Activated CD4-positive, alpha-beta T cell treated with anti-CD3 and anti-CD28 coated beads for 36 hours (primary cell): ENCODE measurements at regions of chr17 and their contacts with region 1.

Region 1: DNA sequence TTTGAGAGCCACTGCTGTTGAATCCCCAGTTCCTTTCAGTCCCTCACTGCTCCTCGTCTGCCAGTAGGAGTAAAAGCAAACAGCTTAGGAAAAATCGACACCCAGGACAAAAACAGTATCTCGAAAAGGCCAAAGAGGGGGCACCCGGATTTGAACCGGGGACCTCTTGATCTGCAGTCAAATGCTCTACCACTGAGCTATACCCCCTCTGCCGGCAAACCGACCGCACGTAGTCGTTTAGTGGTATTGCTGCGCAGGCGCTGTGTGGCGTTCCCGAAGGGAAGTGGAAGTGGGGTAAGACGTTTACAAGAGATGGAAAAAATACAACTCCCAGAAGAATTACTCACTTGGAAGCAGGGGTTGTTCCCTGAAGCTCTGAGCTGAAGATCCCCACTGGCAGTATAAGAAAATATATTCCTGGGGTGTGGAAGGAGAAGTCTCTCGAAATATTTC is 2.2 kb upstream of the PLXDC1 start:
- DNase-seq: peak; percentile 94
- ATAC-seq: peak; percentile 43
- H3K4me3 Mint-ChIP-seq: peak overlapping the region; percentile 95
- H3K27ac Mint-ChIP-seq: peak overlapping the region; percentile 95
- H3K4me1 Mint-ChIP-seq: peaks cover 40% of the 10 kb centered on the region
- H3K27me3 Mint-ChIP-seq: peaks cover 2% of the 10 kb centered on the region

Region 2: GRCh38 chr17:38674749-38675615 is 478.6 kb before region 1 on chr17 and contains the start of gene EPOP:
- CTCF ChIA-PET with region 1: no interaction called
- POLR2A ChIA-PET with region 1: no interaction called
- intact Hi-C with region 1: loop called (anchors 1 to 10 kb)
- DNase-seq: peak; percentile 96
- ATAC-seq: peak; percentile 78
- H3K4me3 Mint-ChIP-seq: peak within 1 kb of the TSS; percentile 76
- H3K27ac Mint-ChIP-seq: peak within 1 kb of the TSS; percentile 85
- H3K4me1 Mint-ChIP-seq: peaks cover 47% of the 10 kb centered on the region
- H3K27me3 Mint-ChIP-seq: peaks cover 9% of the 10 kb centered on the region
- total RNA-seq, gene EPOP: 31.8 to 37.3 TPM

Region 3: GRCh38 chr17:38799378-38800236 is 354.0 kb before region 1 on chr17 and contains the start of gene PIP4K2B:
- CTCF ChIA-PET with region 1: interaction called, 6 read pairs
- POLR2A ChIA-PET with region 1: interaction called, 4 read pairs
- intact Hi-C with region 1: loop called in 1 of 2 experiments (anchors 1 kb)
- DNase-seq: peak; percentile 93
- ATAC-seq: peak; percentile 83
- H3K4me3 Mint-ChIP-seq: peak within 1 kb of the TSS; percentile 99
- H3K27ac Mint-ChIP-seq: peak within 1 kb of the TSS; percentile 94
- H3K4me1 Mint-ChIP-seq: peaks cover 33% of the 10 kb centered on the region
- H3K27me3 Mint-ChIP-seq: no peaks in the 10 kb centered on the region
- total RNA-seq, gene PIP4K2B: 36.3 to 41.6 TPM

Region 4: GRCh38 chr17:38967290-38967738 is 186.3 kb before region 1 on chr17 and contains the start of gene FBXO47:
- CTCF ChIA-PET with region 1: interaction called, 14 read pairs
- POLR2A ChIA-PET with region 1: no interaction called
- intact Hi-C with region 1: loop called in 1 of 2 experiments (anchors 1 kb)
- DNase-seq: peak; percentile 91
- ATAC-seq: peak; percentile 98
- H3K4me3 Mint-ChIP-seq: peak within 1 kb of the TSS; percentile 64
- H3K27ac Mint-ChIP-seq: peak within 1 kb of the TSS; percentile 87
- H3K4me1 Mint-ChIP-seq: peaks cover 16% of the 10 kb centered on the region
- H3K27me3 Mint-ChIP-seq: no peaks in the 10 kb centered on the region
- total RNA-seq, gene FBXO47: 0.11 to 0.16 TPM

Region 5: DNA sequence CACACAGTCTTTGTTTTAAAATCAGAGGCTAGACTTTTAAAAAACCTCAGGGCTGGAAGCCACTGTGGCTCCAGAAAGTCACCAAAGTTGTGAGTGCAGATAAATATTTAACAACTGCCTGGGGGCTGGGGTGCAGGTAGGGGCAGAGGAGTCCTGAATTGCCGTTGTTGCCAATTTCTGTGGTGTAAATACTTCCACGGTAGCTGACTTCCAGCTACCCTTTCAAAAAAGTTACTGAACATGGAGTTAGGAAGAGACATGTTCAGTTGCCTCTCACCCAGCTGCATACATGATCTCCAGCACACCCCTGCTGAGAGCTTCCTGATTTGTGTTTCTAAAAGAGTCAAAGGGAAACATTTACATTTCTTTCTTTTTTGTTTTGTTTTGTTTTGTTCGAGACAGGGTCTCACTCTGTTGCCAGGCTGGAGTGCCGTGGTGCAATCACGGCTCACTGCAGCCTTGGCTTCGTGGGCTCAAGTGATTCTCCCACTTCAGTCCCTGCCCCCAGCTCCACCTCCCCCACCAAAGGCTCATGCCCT is 60.9 kb before region 1 on chr17:
- CTCF ChIA-PET with region 1: interaction called, 9 read pairs
- POLR2A ChIA-PET with region 1: no interaction called
- intact Hi-C with region 1: loop called in 1 of 2 experiments (anchors 2 kb)
- DNase-seq: peak; percentile 24
- ATAC-seq: peak; percentile 33
- H3K4me3 Mint-ChIP-seq: peak overlapping the region; percentile 63
- H3K27ac Mint-ChIP-seq: peak overlapping the region; percentile 87
- H3K4me1 Mint-ChIP-seq: peaks cover 72% of the 10 kb centered on the region
- H3K27me3 Mint-ChIP-seq: no peaks in the 10 kb centered on the region

Region 6: GRCh38 chr17:39235555-39236449 is 82.2 kb after region 1 on chr17:
- CTCF ChIA-PET with region 1: interaction called, 16 read pairs
- POLR2A ChIA-PET with region 1: no interaction called
- intact Hi-C with region 1: loop called in 1 of 2 experiments (anchors 2 kb)
- DNase-seq: peak; percentile 78
- ATAC-seq: peak; percentile 84
- H3K4me3 Mint-ChIP-seq: no peak overlapping the region
- H3K27ac Mint-ChIP-seq: no peak overlapping the region
- H3K4me1 Mint-ChIP-seq: peaks cover 41% of the 10 kb centered on the region
- H3K27me3 Mint-ChIP-seq: peaks cover 5% of the 10 kb centered on the region

Region 7: DNA sequence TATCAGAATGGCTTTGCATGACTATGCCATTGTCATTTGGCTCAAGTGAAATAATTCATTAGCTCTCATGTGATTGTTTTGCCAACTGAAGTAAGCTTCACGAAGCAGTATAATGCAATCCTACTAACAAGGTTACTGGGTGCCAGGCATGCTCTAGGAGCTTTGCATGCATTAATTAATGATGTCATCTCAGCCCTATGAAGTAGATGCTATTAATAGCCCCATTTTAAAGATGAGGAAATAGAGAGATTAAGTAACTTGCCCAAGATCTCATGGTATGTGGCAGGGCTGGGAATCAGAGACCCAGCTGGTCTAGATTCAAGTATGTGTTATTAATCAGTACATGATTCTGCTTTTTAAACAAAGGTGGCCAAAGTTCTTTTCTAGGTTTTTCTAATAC is 1799.0 kb after region 1 on chr17:
- CTCF ChIA-PET with region 1: no interaction called
- POLR2A ChIA-PET with region 1: no interaction called
- intact Hi-C with region 1: no loop called
- DNase-seq: no peak
- ATAC-seq: no peak
- H3K4me3 Mint-ChIP-seq: no peak overlapping the region
- H3K27ac Mint-ChIP-seq: no peak overlapping the region
- H3K4me1 Mint-ChIP-seq: no peaks in the 10 kb centered on the region
- H3K27me3 Mint-ChIP-seq: peaks cover 30% of the 10 kb centered on the region